Posterior cingulate gyrus (tissue), 11 donors: ENCODE measurements at regions of chr3 and their contacts with region 1.

Region 1: DNA sequence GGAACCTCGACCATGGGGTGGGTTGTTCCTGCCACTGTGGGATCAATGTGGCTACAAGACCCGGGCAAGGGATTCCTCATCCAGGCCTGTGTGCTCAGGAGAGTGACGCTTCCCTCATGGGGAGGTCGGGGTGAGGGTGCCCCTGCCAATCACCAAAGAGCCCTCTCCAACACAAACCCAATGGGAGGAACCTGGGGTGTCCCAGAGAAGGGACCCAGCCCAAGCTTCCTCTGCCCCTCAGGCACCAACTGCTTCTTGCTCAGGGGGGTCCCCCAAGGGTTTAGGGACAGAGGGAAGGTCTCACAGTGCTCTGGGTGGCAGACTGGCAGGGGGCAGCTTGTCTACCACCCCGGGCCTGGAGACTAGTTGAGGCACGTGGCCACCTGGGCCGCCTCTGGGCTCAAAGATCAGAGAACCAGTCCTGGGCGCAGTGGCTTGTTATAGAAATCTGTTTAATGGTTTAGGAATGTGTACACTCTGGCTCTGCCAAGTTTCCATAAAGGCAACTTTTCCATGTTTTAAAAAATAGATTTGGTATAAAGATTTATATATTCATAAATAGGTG is 26.6 kb downstream of the GP9 start:
- DNase-seq: peak in 1 of 10 donors; percentile 66

Region 2: GRCh38 chr3:128910006-128910405 is 177.2 kb before region 1 on chr3:
- intact Hi-C with region 1: no loop called
- DNase-seq: peak in 1 of 10 donors; percentile 77

Region 3: DNA sequence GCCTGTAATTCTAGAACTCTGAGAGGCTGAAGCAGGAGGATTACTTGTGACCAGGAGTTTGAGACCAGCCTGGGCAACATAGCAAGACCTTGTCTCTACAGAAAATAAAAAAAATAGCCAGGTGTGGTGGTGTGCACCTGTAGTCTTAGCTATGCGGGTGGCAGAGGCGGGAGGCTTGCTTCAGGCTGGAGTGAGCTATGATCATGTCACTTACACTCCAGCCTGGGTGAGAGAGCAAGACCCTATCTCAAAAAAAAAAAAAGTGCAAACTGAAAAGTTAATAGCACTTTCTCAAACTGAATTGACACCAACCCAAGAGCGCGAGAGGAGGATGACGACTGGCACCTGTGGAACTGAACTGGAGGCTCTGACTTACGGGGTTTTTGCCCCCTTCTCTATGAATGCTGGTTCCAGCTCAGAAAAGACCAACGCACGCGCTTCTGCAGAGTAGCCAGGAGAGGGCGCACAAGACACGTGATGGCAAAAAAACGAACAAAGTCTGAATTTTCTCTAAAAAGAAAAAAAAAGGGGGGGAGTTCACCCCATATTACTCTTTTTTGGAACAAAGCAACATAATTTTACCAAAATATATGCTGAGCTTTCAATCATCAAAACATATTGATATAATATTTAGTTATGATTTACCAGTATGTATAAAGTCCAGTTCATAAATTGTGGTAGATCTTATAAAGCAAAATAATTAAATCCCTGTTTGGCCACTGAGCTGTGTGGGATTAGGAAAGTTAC is 117.1 kb before region 1 on chr3:
- intact Hi-C with region 1: loop called (anchors 10 kb)
- DNase-seq: peak in 7 of 10 donors; percentile 33 to 88 (median 45)

Region 4: GRCh38 chr3:129139911-129140310 is 52.7 kb after region 1 on chr3:
- intact Hi-C with region 1: no loop called
- DNase-seq: peak in 1 of 10 donors; percentile 4